Caco-2 (cell line): ENCODE measurements at regions of chr15 and their contacts with region 1.

Region 1: GRCh38 chr15:100627789-100628395 is 25.5 kb downstream of the ASB7 start:
- DNase-seq: peak; percentile 57 to 67
- H3K4me3 ChIP-seq: no peak overlapping the region
- H3K4me3 Mint-ChIP-seq: no peak overlapping the region
- H3K27ac Mint-ChIP-seq: no peak overlapping the region
- H3K4me1 ChIP-seq: no peaks in the 10 kb centered on the region
- H3K4me1 Mint-ChIP-seq: peaks cover 2% of the 10 kb centered on the region
- H3K27me3 ChIP-seq: no peaks in the 10 kb centered on the region
- H3K27me3 Mint-ChIP-seq: no peaks in the 10 kb centered on the region
- CTCF ChIP-seq: peak; percentile 59 to 69

Region 2: DNA sequence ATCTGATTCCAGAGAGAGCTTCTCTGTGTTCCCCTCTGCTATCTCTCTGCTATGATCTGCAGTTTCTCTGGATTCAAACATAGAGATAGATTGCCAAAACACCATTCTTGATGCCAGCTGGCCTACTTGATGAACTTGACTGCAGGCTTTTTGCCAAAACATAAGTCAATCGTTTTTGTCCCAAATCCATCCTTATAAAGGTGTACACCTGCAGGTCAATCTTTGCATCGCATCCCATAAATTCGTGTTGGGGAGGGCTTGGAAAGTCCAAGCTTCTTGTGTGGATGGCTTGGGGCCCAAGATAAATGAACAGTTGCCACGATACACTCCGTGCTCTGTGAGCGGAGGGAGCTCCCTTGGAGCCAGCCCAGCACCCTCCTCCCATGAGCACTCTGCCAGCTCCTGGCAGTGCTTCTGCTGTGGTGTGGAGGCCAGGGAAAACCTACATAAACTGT is 101.8 kb before region 1 on chr15:
- CTCF ChIA-PET with region 1: no interaction called
- POLR2A ChIA-PET with region 1: no interaction called
- intact Hi-C with region 1: no loop called
- DNase-seq: no peak
- H3K4me3 ChIP-seq: no peak overlapping the region
- H3K4me3 Mint-ChIP-seq: no peak overlapping the region
- H3K27ac Mint-ChIP-seq: no peak overlapping the region
- H3K4me1 ChIP-seq: no peaks in the 10 kb centered on the region
- H3K4me1 Mint-ChIP-seq: no peaks in the 10 kb centered on the region
- H3K27me3 ChIP-seq: no peaks in the 10 kb centered on the region; the same call in 1 of the 2 replicates
- H3K27me3 Mint-ChIP-seq: peaks cover 8% of the 10 kb centered on the region
- CTCF ChIP-seq: no peak

Region 3: GRCh38 chr15:100650685-100651084 is 22.8 kb after region 1 on chr15:
- CTCF ChIA-PET with region 1: no interaction called
- POLR2A ChIA-PET with region 1: no interaction called
- intact Hi-C with region 1: loop called (anchors 1 kb)
- DNase-seq: no peak
- H3K4me3 ChIP-seq: no peak overlapping the region
- H3K4me3 Mint-ChIP-seq: no peak overlapping the region
- H3K27ac Mint-ChIP-seq: no peak overlapping the region
- H3K4me1 ChIP-seq: no peaks in the 10 kb centered on the region
- H3K4me1 Mint-ChIP-seq: no peaks in the 10 kb centered on the region
- H3K27me3 ChIP-seq: no peaks in the 10 kb centered on the region
- H3K27me3 Mint-ChIP-seq: no peaks in the 10 kb centered on the region
- CTCF ChIP-seq: peak in 1 of 2 experiments; percentile 44

Region 4: DNA sequence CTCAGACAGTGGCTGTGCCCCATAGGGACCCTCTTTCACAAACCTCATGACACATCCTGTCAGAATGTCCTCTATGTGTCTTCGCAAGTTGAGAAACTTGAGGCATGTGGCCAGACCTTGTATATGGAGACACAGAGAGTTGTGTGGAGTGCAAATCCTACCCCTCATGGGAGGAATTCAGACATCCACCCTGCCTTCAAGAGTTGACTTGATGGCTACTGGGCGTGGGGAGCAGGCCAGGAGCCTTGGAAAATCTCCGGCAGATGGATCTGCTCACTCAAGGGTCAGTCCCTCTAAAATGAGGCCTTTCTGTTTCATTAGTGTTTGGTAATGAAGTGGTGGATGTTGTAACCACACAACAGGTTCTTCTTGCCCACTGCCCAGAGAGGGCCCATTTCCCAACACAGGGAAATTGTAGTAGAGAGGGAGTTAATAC is 53.4 kb after region 1 on chr15:
- CTCF ChIA-PET with region 1: no interaction called
- POLR2A ChIA-PET with region 1: no interaction called
- intact Hi-C with region 1: no loop called
- DNase-seq: no peak
- H3K4me3 ChIP-seq: no peak overlapping the region
- H3K4me3 Mint-ChIP-seq: no peak overlapping the region
- H3K27ac Mint-ChIP-seq: no peak overlapping the region
- H3K4me1 ChIP-seq: no peaks in the 10 kb centered on the region
- H3K4me1 Mint-ChIP-seq: no peaks in the 10 kb centered on the region
- H3K27me3 ChIP-seq: no peaks in the 10 kb centered on the region
- H3K27me3 Mint-ChIP-seq: no peaks in the 10 kb centered on the region
- CTCF ChIP-seq: no peak